ENCODE measurements at regions of chr6 and their contacts with region 1.

Region 1: DNA sequence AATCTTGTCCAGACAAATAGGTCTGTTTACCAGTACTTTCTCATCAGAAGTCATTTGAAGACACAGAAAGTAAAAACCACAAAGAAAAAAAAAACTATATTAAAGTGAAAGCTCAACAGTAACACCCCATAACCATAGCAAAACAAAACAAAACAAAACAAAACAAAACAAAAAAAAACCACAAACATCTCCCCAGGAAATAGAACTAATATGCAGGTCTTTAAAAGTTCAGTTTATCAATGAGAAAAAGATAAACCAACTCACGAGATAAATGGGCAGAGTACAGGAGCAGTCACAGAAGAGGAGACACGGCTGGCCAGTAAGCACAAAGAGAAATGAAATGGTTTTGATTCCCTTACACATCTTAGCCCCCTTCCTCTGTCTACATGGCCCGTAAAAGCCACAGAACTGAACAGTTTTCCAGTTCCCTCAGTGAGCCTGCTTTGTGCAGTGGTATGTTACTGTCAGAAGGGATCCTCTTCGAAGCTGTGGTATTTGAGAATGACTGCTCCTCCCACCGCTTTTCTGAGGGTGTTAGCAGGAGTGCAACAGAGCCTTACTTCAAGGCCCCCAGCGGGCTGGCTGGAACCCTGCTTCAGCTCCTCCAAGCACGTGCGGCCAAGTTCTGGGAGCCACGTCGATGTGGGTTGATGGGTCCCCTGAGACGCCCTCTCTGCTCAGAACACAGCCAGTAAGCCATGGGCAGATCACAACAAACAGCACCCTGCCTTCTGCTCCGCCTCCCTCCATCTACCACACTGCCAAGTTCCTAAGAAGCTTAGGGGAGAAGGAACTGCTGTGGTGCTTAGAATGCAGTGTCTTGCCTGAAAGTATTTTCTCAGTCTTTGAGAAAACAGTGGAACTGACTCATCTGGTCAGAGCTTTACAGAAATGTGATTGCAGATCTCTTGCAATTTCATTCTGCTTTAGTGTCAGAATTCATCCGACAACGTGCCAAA is 14.0 kb downstream of the UST start:
- DNase-seq: peak; percentile 75
- H3K4me3 Mint-ChIP-seq: peak overlapping the region; percentile 65
- H3K27ac Mint-ChIP-seq: peak overlapping the region; percentile 88
- H3K4me1 Mint-ChIP-seq: peaks cover 73% of the 10 kb centered on the region
- H3K27me3 Mint-ChIP-seq: peaks cover 8% of the 10 kb centered on the region

Region 2: GRCh38 chr6:148203970-148204369 is 556.9 kb before region 1 on chr6:
- CTCF ChIA-PET with region 1: no interaction called
- POLR2A ChIA-PET with region 1: no interaction called
- intact Hi-C with region 1: loop called (anchors 1 kb)
- DNase-seq: peak; percentile 80
- H3K4me3 Mint-ChIP-seq: peak overlapping the region; percentile 55
- H3K27ac Mint-ChIP-seq: peak overlapping the region; percentile 72
- H3K4me1 Mint-ChIP-seq: peaks cover 35% of the 10 kb centered on the region
- H3K27me3 Mint-ChIP-seq: peaks cover 69% of the 10 kb centered on the region

Region 3: DNA sequence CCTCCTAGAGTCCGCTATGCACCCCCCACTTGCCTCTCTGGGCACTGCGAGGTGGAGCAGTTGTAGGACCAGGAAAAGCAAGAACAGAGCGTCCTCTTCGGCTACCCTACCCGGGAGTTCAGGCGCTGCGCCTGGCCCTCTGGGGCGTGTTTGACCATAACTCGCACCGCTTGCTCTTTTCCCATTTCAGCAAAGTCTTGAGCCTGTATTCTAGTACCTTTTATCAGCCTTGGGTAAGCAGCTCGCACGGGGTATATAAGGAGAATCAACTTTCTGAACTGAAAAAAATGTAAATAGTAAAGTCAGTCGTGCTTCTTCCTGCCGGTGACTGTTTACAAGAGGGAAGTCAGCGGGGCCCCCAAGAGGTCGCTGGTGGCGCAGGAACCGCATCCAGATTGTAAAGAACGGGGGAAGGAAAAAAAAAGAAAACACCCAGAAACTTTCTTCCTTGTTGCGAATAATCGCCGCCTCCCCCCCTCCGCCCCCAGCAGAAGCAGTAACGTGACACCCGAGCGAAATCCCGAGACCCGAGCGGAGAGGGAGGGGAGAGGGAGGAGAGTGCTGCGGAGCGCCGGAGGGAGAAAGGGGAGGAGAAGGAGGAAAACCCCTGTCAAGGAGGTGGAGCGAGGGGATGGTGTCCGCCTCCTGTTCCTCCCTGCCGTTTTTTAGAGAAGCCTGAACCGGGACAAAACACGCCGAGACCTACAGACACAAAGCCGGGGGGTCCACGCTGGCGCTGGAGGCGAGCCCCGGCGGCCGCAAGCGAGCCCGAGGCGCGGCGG is 14.3 kb before region 1 on chr6 and contains the start of gene UST:
- CTCF ChIA-PET with region 1: interaction called, 13 read pairs
- POLR2A ChIA-PET with region 1: interaction called, 11 read pairs
- intact Hi-C with region 1: loop called (anchors 1 kb)
- DNase-seq: peak; percentile 79
- H3K4me3 Mint-ChIP-seq: peak within 1 kb of the TSS; percentile 88
- H3K27ac Mint-ChIP-seq: peak within 1 kb of the TSS; percentile 78
- H3K4me1 Mint-ChIP-seq: peaks cover 28% of the 10 kb centered on the region
- H3K27me3 Mint-ChIP-seq: peaks cover 8% of the 10 kb centered on the region
- total RNA-seq, gene UST: 3.7 to 4.9 TPM

Region 4: DNA sequence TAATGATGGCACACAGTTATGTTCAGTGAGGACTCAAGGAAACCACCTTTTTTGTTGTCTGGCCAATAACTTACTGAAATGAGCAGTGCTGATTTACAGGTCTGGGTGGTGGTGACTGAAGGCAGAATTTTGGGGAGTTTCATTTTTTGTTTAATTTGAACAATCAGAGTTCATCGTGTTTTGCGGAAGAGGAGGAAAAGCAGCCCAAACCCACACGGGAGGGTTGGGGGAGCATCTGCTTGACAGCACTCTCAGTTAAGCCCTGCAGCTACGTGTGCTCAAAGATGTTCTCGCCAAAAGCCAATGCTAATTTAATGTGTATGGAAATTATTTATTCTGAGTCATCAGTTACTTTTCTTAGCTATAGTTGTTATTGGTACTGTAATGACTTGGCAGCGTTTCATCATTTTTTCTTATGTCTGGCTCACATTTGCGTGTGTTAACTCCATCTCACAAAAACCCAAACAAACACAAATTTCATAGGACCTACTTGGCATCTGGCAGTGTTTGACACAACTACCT is 75.1 kb after region 1 on chr6:
- CTCF ChIA-PET with region 1: interaction called, 9 read pairs
- POLR2A ChIA-PET with region 1: interaction called, 8 read pairs
- intact Hi-C with region 1: loop called (anchors 1 kb)
- DNase-seq: peak; percentile 71
- H3K4me3 Mint-ChIP-seq: peak overlapping the region; percentile 36
- H3K27ac Mint-ChIP-seq: peak overlapping the region; percentile 79
- H3K4me1 Mint-ChIP-seq: peaks cover 49% of the 10 kb centered on the region
- H3K27me3 Mint-ChIP-seq: peaks cover 5% of the 10 kb centered on the region

Region 5: GRCh38 chr6:148947621-148948444 is 187.0 kb after region 1 on chr6:
- CTCF ChIA-PET with region 1: interaction called, 5 read pairs
- POLR2A ChIA-PET with region 1: no interaction called
- intact Hi-C with region 1: loop called (anchors 1 kb)
- DNase-seq: peak; percentile 86
- H3K4me3 Mint-ChIP-seq: no peak overlapping the region
- H3K27ac Mint-ChIP-seq: no peak overlapping the region
- H3K4me1 Mint-ChIP-seq: peaks cover 17% of the 10 kb centered on the region
- H3K27me3 Mint-ChIP-seq: no peaks in the 10 kb centered on the region

Region 6: GRCh38 chr6:148959004-148959403 is 198.2 kb after region 1 on chr6:
- CTCF ChIA-PET with region 1: no interaction called
- POLR2A ChIA-PET with region 1: no interaction called
- intact Hi-C with region 1: no loop called
- DNase-seq: no peak
- H3K4me3 Mint-ChIP-seq: no peak overlapping the region
- H3K27ac Mint-ChIP-seq: no peak overlapping the region
- H3K4me1 Mint-ChIP-seq: no peaks in the 10 kb centered on the region
- H3K27me3 Mint-ChIP-seq: no peaks in the 10 kb centered on the region

Measured in activated CD4-positive, alpha-beta memory T cell treated with anti-CD3 and anti-CD28 coated beads for 36 hours (primary cell).